ENCODE measurements at regions of chr13 and their contacts with region 1.

Region 1: GRCh38 chr13:57969951-57970350 is 338.4 kb downstream of the PCDH17 start:
- DNase-seq: no peak

Region 2: DNA sequence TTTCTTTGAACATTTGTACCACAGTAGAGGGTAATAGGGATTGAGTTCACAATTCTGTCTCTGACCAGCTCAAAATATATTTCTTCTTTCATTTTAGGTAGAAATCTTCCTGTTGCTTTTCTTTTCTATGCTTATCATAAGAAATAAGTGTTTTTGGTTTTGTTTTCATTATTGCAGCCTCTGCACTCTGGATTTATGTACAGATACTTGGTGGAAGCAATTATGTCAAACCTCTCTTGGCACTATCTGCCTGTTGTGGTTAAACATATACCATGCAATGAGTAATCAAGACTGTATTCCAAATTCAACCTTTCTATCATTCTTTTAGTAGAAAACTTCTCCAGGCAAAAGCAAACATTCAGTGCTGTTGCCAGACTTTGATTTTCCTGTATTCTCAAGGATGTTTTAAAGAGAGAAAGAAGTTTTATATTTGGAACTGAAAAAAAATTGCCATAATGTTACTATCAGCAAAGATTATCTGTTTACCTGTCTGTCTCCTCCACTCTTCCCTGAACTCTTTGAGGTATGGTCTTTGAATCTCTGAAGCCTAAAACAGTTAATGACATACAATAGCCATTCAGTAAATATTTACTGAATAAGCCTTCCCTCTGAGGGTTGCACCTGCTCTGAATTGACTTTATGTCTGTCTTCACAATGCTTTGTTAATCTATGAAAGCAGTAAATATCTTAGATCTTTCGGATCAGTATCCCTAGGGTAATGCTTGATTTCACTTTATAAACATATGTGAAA is 1441.7 kb before region 1 on chr13:
- intact Hi-C with region 1: loop called in 1 of 2 experiments (anchors 5 kb)
- DNase-seq: no peak

Region 3: DNA sequence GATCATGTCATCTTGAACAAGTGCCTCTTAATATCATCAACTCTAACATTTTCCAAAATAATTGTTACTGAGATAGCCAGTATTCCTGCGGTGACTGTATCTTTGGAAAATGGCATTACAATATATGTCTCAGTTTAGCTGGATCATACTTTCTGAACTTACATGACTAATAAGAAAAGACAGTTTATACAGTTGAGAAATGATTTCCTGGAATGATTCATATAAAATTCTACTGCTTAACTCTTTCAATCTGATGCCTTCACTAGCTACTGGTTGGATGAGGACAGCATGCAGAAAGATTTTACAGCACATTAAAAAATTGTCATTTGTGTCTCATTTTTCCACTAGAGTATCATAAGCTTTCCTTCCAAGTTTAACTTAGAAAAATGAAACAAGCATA is 36.3 kb before region 1 on chr13:
- intact Hi-C with region 1: no loop called
- DNase-seq: no peak

Region 4: DNA sequence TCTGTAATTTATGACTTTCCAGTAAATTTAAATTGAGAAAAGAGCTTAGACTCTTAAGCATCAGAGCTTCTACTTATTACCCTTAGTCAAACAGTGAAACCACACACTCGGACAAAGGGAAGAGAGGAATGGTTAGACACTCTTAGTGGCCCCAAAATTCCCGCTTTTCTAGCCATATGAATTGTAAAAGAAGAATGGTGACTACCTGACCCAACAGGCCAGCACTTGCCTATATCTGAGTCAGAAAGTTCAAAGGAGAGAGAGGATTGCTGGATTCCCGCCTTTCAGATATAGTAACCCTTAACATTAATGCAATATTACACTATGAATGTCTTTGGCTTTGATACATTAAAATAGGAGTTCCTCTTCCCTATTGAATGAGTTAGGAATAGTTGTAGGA is 21.1 kb before region 1 on chr13:
- intact Hi-C with region 1: no loop called
- DNase-seq: no peak

Region 5: DNA sequence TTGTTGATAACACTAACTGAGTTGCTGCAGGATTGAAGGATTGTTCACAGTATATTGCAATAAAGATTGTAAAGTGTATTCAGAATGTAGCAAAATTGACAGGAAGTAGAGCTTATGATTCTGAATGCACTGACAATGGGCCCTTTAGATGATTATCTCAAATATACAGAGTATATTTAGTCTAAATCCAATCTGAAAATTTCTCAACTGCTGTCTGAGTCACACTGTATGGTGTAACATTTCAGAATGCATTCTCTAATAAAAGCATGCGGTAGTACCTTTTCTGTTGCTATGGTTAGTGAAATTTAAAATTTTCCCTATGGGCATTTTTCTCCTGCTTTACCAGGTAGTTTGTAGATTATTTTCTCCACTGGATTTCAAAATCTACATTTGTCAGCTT is 26.8 kb after region 1 on chr13:
- intact Hi-C with region 1: no loop called
- DNase-seq: no peak

Region 6: GRCh38 chr13:58119351-58119750 is 149.4 kb after region 1 on chr13:
- intact Hi-C with region 1: no loop called
- DNase-seq: no peak